Calu3 (cell line): ENCODE measurements at regions of chr1 and their contacts with region 1.

Region 1: DNA sequence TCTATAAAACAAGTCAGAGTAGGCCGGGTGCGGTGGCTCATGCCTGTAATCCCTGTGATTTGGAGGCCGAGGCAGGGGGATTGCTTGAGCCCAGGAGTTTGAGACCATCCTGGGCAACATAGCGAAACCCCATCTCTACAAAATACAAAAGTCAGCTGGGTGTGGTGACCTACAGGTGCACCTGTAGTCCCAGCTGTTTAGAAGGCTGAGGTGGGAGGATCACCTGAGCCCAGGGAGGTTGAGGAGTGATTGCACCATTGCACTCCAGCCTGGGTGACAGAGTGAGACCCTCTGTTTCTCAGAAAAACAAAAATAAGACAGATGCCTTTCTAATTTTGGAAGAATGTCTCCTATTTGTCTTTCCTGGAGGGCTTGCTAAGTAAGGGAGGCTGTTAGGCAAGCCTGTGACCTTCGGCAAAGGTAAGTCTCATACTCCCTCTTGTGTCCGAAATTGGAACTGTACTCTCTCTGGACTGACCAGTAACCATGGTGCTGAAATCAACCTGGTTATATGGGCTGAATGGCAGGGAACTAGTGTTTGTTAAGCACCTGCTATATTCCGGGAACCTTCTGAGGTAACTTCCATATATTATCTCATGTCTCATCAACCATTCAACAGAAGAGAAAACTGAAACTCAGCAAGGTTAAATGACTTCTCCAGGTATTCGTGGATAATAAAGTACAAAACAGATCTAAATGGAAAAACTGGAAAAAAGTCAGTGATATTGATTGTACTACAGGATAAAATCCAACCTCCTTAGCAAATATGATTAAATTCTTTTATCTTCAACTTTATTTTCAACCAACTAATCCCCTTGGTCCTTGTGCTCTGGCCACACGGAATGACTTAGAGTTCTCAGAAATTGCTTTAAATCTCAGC is 11.8 kb upstream of the RAB3B start:
- DNase-seq: peak; percentile 88
- H3K4me3 Mint-ChIP-seq: no peak overlapping the region
- H3K27ac Mint-ChIP-seq: peak overlapping the region; percentile 25
- H3K4me1 Mint-ChIP-seq: peaks cover 17% of the 10 kb centered on the region
- H3K27me3 Mint-ChIP-seq: peaks cover 23% of the 10 kb centered on the region
- CTCF ChIP-seq: peak; percentile 86

Region 2: GRCh38 chr1:51819810-51820209 is 182.5 kb before region 1 on chr1:
- CTCF ChIA-PET with region 1: no interaction called
- intact Hi-C with region 1: loop called (anchors 10 kb)
- DNase-seq: no peak
- H3K4me3 Mint-ChIP-seq: no peak overlapping the region
- H3K27ac Mint-ChIP-seq: no peak overlapping the region
- H3K4me1 Mint-ChIP-seq: peaks cover 18% of the 10 kb centered on the region
- H3K27me3 Mint-ChIP-seq: no peaks in the 10 kb centered on the region
- CTCF ChIP-seq: no peak

Region 3: GRCh38 chr1:51897699-51898031 is 104.6 kb before region 1 on chr1:
- CTCF ChIA-PET with region 1: interaction called, 13 read pairs
- intact Hi-C with region 1: loop called (anchors 1 kb)
- DNase-seq: no peak
- H3K4me3 Mint-ChIP-seq: no peak overlapping the region
- H3K27ac Mint-ChIP-seq: no peak overlapping the region
- H3K4me1 Mint-ChIP-seq: peaks cover 18% of the 10 kb centered on the region
- H3K27me3 Mint-ChIP-seq: peaks cover 44% of the 10 kb centered on the region
- CTCF ChIP-seq: no peak